Ascending aorta (tissue), 2 donors: ENCODE measurements at regions of chr5 and their contacts with region 1.

Region 1: DNA sequence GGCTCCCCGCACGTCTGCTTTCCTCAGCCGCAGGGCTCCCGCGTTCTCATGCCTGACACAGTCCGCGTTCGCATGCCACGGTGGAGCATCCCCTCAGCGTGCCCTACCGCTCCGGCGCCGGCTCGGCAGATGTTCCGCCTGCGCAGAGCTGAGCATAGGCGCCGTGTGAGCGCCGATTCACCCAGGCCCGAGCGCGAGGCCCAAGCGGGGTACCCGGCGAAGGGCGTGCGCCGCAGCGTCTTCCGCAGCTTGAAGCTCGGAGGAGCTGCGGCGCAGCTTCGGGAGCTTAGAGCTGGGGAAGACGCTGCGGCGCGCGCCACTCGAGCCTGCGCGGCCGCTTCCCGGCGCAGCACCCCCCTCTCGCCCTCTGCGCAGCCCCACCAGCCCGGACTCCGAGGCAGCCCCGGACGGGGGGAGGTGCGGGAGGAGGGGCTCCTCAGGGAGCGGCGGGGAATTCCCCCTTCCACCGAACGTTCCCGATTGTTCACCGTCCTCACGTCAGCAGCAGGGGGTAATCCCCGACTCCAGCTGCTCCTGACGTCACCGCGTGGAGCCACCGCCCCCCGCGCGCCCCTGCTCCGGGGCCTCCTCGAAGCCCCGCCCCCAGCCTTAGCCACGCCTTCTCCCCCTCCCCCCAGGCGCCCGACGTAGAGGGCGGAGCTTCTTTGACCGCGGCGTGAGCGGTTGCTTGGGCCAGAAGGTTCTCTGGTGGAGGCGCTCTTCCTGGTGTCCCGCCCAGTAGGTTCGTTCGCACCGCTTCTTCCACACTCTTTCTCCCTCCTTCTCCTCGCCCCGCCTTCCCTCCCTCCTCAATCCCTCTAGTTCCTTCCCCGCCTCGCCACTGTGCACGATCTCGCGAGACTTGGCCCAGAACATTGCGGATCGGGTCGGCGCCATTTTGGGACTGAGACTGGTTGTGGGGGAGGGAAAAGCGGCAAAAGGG is at the start of gene GPBP1:
- DNase-seq: peak; percentile 96 to 99
- H3K4me3 ChIP-seq: peak within 1 kb of the TSS; percentile 83 to 99
- H3K27ac ChIP-seq: peak within 1 kb of the TSS; percentile 99
- H3K4me1 ChIP-seq: peaks cover 0 to 17% of the 10 kb centered on the region in 2 donors
- H3K27me3 ChIP-seq: no peaks in the 10 kb centered on the region
- CTCF ChIP-seq: no peak
- total RNA-seq, gene GPBP1: 21.2 TPM

Region 2: GRCh38 chr5:55307383-55308253 is 1865.8 kb before region 1 on chr5 and contains the starts of genes DHX29 and MTREX:
- intact Hi-C with region 1: loop called (anchors 10 kb)
- DNase-seq: peak; percentile 71 to 95
- H3K4me3 ChIP-seq: peak within 1 kb of the TSS; percentile 76 to 92
- H3K27ac ChIP-seq: peak within 1 kb of the TSS; percentile 80 to 87
- H3K4me1 ChIP-seq: peaks cover 12 to 44% of the 10 kb centered on the region in 2 donors
- H3K27me3 ChIP-seq: no peaks in the 10 kb centered on the region
- CTCF ChIP-seq: no peak
- total RNA-seq, gene DHX29: 11.3 TPM
- total RNA-seq, gene MTREX: 17.1 TPM

Region 3: GRCh38 chr5:56457887-56458812 is 715.3 kb before region 1 on chr5:
- intact Hi-C with region 1: loop called (anchors 5 kb)
- DNase-seq: no peak
- H3K4me3 ChIP-seq: peak overlapping the region in 1 of 2 donors; percentile 41
- H3K27ac ChIP-seq: peak overlapping the region; percentile 82 to 94
- H3K4me1 ChIP-seq: peaks cover 13 to 24% of the 10 kb centered on the region in 2 donors
- H3K27me3 ChIP-seq: no peaks in the 10 kb centered on the region
- CTCF ChIP-seq: no peak

Region 4: DNA sequence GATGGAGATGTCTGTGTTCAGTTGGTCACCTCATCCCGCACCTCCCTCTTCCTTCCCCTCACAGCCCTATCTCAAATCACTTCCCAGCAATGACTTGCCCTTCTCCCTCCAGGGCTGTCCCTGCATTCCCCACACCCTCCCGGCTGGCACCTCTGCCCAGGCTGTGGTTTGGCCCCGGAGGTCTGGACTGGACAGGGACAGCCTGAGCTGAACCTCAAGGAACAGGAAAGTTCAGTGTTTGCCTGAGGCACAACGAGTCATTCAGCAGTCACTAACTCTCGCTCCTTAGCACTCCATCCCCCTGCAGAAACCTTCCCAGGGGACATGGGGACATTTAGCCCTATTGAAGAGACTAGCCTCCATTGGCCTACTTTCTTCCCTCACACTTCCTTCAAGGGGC is 416.4 kb before region 1 on chr5:
- intact Hi-C with region 1: no loop called
- DNase-seq: no peak
- H3K4me3 ChIP-seq: no peak overlapping the region
- H3K27ac ChIP-seq: no peak overlapping the region
- H3K4me1 ChIP-seq: no peaks in the 10 kb centered on the region
- H3K27me3 ChIP-seq: no peaks in the 10 kb centered on the region
- CTCF ChIP-seq: no peak

Region 5: GRCh38 chr5:56909294-56910209 is 263.9 kb before region 1 on chr5 and contains the start of gene SETD9:
- intact Hi-C with region 1: loop called (anchors 1 kb)
- DNase-seq: peak; percentile 90 to 99
- H3K4me3 ChIP-seq: peak within 1 kb of the TSS; percentile 63 to 92
- H3K27ac ChIP-seq: peak within 1 kb of the TSS; percentile 90 to 99
- H3K4me1 ChIP-seq: peaks cover 2 to 6% of the 10 kb centered on the region in 2 donors
- H3K27me3 ChIP-seq: no peaks in the 10 kb centered on the region
- CTCF ChIP-seq: no peak
- total RNA-seq, gene SETD9: 16.8 TPM

Region 6: DNA sequence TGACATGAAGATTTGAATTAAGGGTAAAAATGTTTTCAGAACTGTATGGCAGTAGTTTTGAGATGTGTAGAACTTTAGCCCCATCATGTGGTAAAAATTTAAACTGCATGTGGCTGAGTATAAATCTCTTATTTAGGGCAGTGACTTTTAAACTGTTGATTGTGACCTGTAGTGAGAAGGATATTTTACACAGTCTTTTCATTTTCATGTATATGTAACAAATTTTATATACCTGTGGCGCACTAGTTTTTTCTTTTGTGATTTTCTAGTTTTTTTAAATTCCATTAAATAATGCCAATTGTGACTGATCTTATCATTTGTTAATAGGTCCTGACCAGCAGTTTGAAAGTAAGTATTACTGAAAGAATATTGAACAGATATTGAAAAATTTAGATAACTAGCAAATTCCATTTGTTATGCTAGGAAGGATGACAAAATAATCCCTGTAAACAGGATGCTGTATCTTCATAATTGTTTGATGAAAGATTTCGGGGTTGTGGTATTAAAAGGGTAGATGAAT is 47.7 kb after region 1 on chr5:
- intact Hi-C with region 1: loop called (anchors 2 kb)
- DNase-seq: no peak
- H3K4me3 ChIP-seq: no peak overlapping the region
- H3K27ac ChIP-seq: no peak overlapping the region
- H3K4me1 ChIP-seq: peaks cover 5 to 6% of the 10 kb centered on the region in 2 donors
- H3K27me3 ChIP-seq: no peaks in the 10 kb centered on the region
- CTCF ChIP-seq: peak; percentile 80 to 90 (median 89)